Sigmoid colon (tissue), 7 donors: ENCODE measurements at regions of chr5 and their contacts with region 1.

Region 1: DNA sequence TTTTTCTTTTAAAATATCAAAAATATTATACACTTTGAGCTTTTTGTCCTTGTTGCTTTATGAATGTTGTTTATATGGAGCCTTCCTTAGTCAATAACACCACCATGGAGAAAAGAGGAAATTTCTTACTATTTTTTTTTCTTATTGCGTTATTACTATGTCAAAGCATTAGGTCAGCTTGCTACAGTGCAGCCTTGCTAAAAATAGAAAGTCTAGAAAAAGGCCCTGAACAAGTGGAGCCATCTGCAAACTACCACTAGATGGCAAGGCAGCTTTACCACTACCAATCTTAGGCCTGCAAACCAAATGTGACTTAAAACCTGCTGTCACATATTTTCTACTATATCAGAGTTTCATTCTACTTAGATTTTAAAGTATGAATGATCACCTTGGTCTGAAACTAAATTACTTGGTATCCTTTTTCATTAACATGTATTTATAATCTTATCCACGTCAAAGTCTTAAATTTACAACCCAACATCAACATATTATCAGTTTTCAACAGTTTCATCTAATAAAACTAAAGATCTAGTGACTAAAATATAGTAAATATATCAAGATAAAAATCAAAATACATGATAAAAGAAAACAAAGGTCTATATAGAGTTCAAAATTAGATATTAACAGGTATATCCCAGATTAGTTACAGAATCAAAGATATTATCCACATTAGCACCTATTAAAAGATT is 113.1 kb upstream of the ACOT12 start:
- DNase-seq: peak; percentile 76
- H3K4me3 ChIP-seq: no peak overlapping the region
- H3K27ac ChIP-seq: peak overlapping the region in 2 of 4 donors; percentile 20 to 63
- H3K4me1 ChIP-seq: peaks cover 0 to 22% (median 3%) of the 10 kb centered on the region in 4 donors
- H3K27me3 ChIP-seq: no peaks in the 10 kb centered on the region
- CTCF ChIP-seq: peak; percentile 71 to 87 (median 78)
- EP300 ChIP-seq: no peak
- POLR2A ChIP-seq: no peak

Region 2: GRCh38 chr5:81425569-81425968 is 81.5 kb before region 1 on chr5:
- intact Hi-C with region 1: loop called (anchors 5 kb)
- DNase-seq: no peak
- H3K4me3 ChIP-seq: no peak overlapping the region
- H3K27ac ChIP-seq: peak overlapping the region in 2 of 4 donors; percentile 35 to 52
- H3K4me1 ChIP-seq: peaks cover 0 to 38% (median 25%) of the 10 kb centered on the region in 4 donors
- H3K27me3 ChIP-seq: no peaks in the 10 kb centered on the region
- CTCF ChIP-seq: peak; percentile 37 to 68 (median 44)
- EP300 ChIP-seq: no peak
- POLR2A ChIP-seq: no peak

Region 3: GRCh38 chr5:81971712-81972495 is 464.9 kb after region 1 on chr5 and contains the start of gene ATG10:
- intact Hi-C with region 1: loop called (anchors 2 kb)
- DNase-seq: peak; percentile 96
- H3K4me3 ChIP-seq: peak within 1 kb of the TSS; percentile 69 to 87 (median 70)
- H3K27ac ChIP-seq: peak within 1 kb of the TSS; percentile 95 to 99 (median 98)
- H3K4me1 ChIP-seq: peaks cover 0 to 19% (median 6%) of the 10 kb centered on the region in 4 donors
- H3K27me3 ChIP-seq: no peaks in the 10 kb centered on the region
- CTCF ChIP-seq: no peak
- EP300 ChIP-seq: no peak
- POLR2A ChIP-seq: peak; percentile 88 to 93
- total RNA-seq, gene ATG10: 6.4 to 13.2 (median 10.7) TPM